A673 (cell line): ENCODE measurements at regions of chr3 and their contacts with region 1.

Region 1: DNA sequence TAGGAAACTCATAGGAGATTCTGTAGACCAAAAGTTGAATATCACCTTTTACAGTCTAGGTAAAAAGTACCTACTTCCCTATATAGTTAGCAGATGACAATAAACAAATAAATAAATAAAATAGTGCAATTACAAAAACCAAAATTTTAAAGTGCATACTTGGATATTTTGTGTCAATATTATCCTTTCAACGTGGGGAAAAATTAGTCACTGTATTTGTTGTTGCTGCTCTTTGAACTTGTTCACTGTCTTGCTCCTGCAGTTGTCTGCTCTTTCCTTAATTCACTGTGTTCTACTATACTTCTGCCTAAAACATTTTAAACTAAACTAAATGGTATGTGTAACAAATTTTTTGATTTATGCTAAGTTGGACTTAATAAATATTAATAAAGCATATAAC is 889.0 kb downstream of the ROBO1 start:
- DNase-seq: no peak
- H3K4me3 ChIP-seq: no peak overlapping the region
- H3K27ac ChIP-seq: no peak overlapping the region
- H3K4me1 ChIP-seq: peaks cover 31% of the 10 kb centered on the region
- H3K27me3 ChIP-seq: no peaks in the 10 kb centered on the region
- CTCF ChIP-seq: no peak

Region 2: GRCh38 chr3:78351334-78351733 is 527.5 kb before region 1 on chr3:
- CTCF ChIA-PET with region 1: no interaction called
- POLR2A ChIA-PET with region 1: interaction called, 11 read pairs
- intact Hi-C with region 1: no loop called
- DNase-seq: no peak
- H3K4me3 ChIP-seq: no peak overlapping the region
- H3K27ac ChIP-seq: no peak overlapping the region
- H3K4me1 ChIP-seq: peaks cover 56% of the 10 kb centered on the region
- H3K27me3 ChIP-seq: no peaks in the 10 kb centered on the region
- CTCF ChIP-seq: no peak

Region 3: DNA sequence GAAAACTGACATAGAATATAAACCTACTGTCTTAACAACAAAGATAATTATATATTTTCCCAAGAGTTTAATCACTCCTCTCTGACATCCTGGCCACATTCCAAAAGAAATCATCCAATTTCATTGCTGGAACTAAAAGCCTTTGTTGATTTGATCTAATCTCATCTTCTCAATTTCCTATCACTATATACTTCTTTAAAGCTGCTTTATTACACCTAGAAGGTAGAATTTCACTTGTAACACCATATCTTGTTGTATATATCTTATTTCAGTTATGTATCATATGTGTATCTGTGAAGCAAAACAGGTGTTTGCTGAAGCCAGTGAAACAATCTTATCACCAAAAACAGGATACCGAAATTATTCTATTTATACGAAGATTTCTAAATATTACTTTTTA is 148.8 kb after region 1 on chr3:
- CTCF ChIA-PET with region 1: no interaction called
- POLR2A ChIA-PET with region 1: interaction called, 13 read pairs
- intact Hi-C with region 1: no loop called
- DNase-seq: no peak
- H3K4me3 ChIP-seq: no peak overlapping the region
- H3K27ac ChIP-seq: no peak overlapping the region
- H3K4me1 ChIP-seq: peaks cover 20% of the 10 kb centered on the region
- H3K27me3 ChIP-seq: no peaks in the 10 kb centered on the region
- CTCF ChIP-seq: no peak

Region 4: GRCh38 chr3:79067734-79068133 is 188.9 kb after region 1 on chr3:
- CTCF ChIA-PET with region 1: no interaction called
- POLR2A ChIA-PET with region 1: no interaction called
- intact Hi-C with region 1: no loop called
- DNase-seq: no peak
- H3K4me3 ChIP-seq: no peak overlapping the region
- H3K27ac ChIP-seq: no peak overlapping the region
- H3K4me1 ChIP-seq: no peaks in the 10 kb centered on the region
- H3K27me3 ChIP-seq: no peaks in the 10 kb centered on the region
- CTCF ChIP-seq: no peak